K562 (cell line): ENCODE measurements at regions of chr10 and their contacts with region 1.

Region 1: GRCh38 chr10:110671788-110672579 is 27.8 kb downstream of the RBM20 start:
- DNase-seq: peak; percentile 78 to 85 (median 80)
- ATAC-seq: peak; percentile 94
- H3K4me3 ChIP-seq: peak overlapping the region; percentile 59
- H3K27ac ChIP-seq: peak overlapping the region; percentile 91
- H3K4me1 ChIP-seq: peaks cover 12 to 26% of the 10 kb centered on the region in 2 experiments; a peak in 4 of 5 replicates
- H3K27me3 ChIP-seq: no peaks in the 10 kb centered on the region
- CTCF ChIP-seq: peak; percentile 96 to 99 (median 99)
- EP300 ChIP-seq: no peak
- POLR2A ChIP-seq: peak; percentile 70
- RAD21 ChIP-seq: peak in 1 of 2 experiments; percentile 63; a peak in 3 of 4 replicates

Region 2: GRCh38 chr10:110648692-110649346 is 23.2 kb before region 1 on chr10:
- CTCF ChIA-PET with region 1: no interaction called
- POLR2A ChIA-PET with region 1: interaction called, 4 read pairs
- in situ Hi-C with region 1: no loop called
- intact Hi-C with region 1: loop called (anchors 2 kb)
- DNase-seq: no peak
- ATAC-seq: no peak
- H3K4me3 ChIP-seq: no peak overlapping the region
- H3K27ac ChIP-seq: no peak overlapping the region
- H3K4me1 ChIP-seq: peaks cover 13 to 24% of the 10 kb centered on the region in 2 experiments
- H3K27me3 ChIP-seq: no peaks in the 10 kb centered on the region
- CTCF ChIP-seq: no peak
- EP300 ChIP-seq: no peak
- POLR2A ChIP-seq: no peak
- RAD21 ChIP-seq: no peak

Region 3: DNA sequence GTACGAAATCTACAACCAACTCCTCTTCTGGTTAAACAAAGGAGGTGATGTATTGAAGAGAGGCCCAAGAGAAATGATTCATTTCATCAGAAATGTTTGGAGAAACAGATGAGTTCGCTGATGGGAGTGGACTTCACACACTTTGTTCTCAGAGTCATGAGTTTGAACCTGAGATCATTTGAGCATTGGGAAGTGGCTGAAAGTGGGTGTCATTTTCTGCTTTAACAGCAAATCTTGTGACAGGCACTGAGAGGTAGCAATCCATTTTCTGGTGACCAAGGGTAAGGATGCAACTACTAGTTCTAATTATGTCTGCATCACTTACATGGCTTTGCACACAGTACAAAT is 23.5 kb after region 1 on chr10:
- CTCF ChIA-PET with region 1: no interaction called
- POLR2A ChIA-PET with region 1: no interaction called
- in situ Hi-C with region 1: no loop called
- intact Hi-C with region 1: no loop called
- DNase-seq: no peak
- ATAC-seq: no peak
- H3K4me3 ChIP-seq: no peak overlapping the region
- H3K27ac ChIP-seq: no peak overlapping the region
- H3K4me1 ChIP-seq: no peaks in the 10 kb centered on the region; a peak in 1 of 5 replicates
- H3K27me3 ChIP-seq: no peaks in the 10 kb centered on the region
- CTCF ChIP-seq: no peak
- EP300 ChIP-seq: no peak
- POLR2A ChIP-seq: no peak
- RAD21 ChIP-seq: no peak